ENCODE measurements at regions of chr5 and their contacts with region 1.

Region 1: GRCh38 chr5:56670118-56670483 is 145.2 kb upstream of the MAP3K1 start:
- DNase-seq: peak; percentile 51
- ATAC-seq: peak; percentile 91
- H3K4me3 Mint-ChIP-seq: peak overlapping the region; percentile 69
- H3K27ac Mint-ChIP-seq: peak overlapping the region; percentile 93
- H3K4me1 Mint-ChIP-seq: peaks cover 83% of the 10 kb centered on the region
- H3K27me3 Mint-ChIP-seq: no peaks in the 10 kb centered on the region
- CTCF ChIP-seq: no peak

Region 2: GRCh38 chr5:55885359-55885758 is 784.7 kb before region 1 on chr5:
- CTCF ChIA-PET with region 1: no interaction called
- POLR2A ChIA-PET with region 1: no interaction called
- intact Hi-C with region 1: no loop called
- DNase-seq: no peak
- ATAC-seq: no peak
- H3K4me3 Mint-ChIP-seq: no peak overlapping the region
- H3K27ac Mint-ChIP-seq: no peak overlapping the region
- H3K4me1 Mint-ChIP-seq: no peaks in the 10 kb centered on the region
- H3K27me3 Mint-ChIP-seq: peaks cover 9% of the 10 kb centered on the region
- CTCF ChIP-seq: no peak

Region 3: GRCh38 chr5:56328753-56329560 is 341.1 kb before region 1 on chr5:
- CTCF ChIA-PET with region 1: no interaction called
- POLR2A ChIA-PET with region 1: interaction called, 5 read pairs
- intact Hi-C with region 1: loop called (anchors 5 kb)
- DNase-seq: no peak
- ATAC-seq: peak; percentile 80
- H3K4me3 Mint-ChIP-seq: peak overlapping the region; percentile 52
- H3K27ac Mint-ChIP-seq: peak overlapping the region; percentile 89
- H3K4me1 Mint-ChIP-seq: peaks cover 59% of the 10 kb centered on the region
- H3K27me3 Mint-ChIP-seq: no peaks in the 10 kb centered on the region
- CTCF ChIP-seq: no peak

Region 4: DNA sequence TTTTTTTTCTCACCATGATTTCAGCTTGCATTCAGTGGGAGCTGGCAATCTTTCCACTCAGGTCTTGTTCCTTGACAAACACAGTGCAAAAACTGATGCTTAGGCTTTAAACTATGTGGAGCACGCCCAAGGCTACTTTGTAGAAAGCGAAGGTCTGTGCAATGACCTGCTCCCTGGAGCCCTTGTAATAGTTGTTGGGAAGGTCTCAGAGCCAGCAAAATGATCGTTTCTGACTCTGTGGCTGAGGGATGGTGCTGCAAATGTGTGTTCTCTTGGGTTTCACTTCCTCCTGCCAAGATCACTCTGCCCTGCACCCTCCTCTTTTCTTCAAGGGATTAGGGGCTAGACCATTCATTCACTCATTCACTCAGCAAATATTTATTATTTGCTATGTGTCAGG is 104.5 kb before region 1 on chr5:
- CTCF ChIA-PET with region 1: interaction called, 4 read pairs
- POLR2A ChIA-PET with region 1: interaction called, 12 read pairs
- intact Hi-C with region 1: loop called (anchors 2 kb)
- DNase-seq: peak; percentile 32
- ATAC-seq: peak; percentile 97
- H3K4me3 Mint-ChIP-seq: peak overlapping the region; percentile 49
- H3K27ac Mint-ChIP-seq: peak overlapping the region; percentile 33
- H3K4me1 Mint-ChIP-seq: peaks cover 48% of the 10 kb centered on the region
- H3K27me3 Mint-ChIP-seq: no peaks in the 10 kb centered on the region
- CTCF ChIP-seq: no peak

Region 5: DNA sequence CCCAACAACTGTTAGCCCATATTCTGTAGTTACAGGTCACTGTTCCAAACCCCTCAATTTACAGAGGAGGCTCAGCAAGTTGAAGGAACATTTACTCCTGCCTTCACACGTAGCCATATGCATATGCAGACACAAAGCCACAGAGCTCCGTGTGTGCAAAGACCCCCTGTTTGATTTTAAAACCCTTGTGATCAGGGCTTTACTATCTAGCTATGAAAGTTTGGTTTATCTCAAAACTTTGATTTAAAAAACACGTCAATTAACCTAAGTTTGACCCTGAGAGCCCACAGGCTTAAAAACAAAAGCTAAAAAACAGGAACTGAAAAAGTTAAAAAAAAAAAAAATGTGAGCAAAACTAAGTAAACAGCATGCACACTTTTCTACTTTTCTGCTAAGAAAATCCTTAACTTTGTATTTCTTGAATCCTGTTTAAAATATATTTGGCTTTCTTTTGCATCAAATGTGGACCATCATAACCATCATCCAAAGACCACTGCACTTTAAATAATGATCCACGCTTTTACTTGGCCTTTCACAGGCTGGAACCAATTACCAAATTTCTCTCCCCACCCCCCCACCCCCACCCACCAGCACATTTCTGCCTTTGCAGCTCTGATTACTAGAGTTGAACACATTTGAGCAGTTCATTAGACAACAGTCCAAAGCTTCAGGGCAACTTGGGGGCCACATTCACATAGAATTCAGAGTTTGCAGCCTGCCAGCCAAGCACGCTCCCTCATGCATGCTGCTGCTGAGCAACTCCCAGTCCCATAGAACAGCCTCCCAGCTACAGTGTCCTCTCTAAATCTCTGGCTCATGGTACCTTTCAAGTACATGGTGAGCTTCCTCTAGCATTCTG is 16.5 kb after region 1 on chr5:
- CTCF ChIA-PET with region 1: interaction called, 13 read pairs
- POLR2A ChIA-PET with region 1: interaction called, 84 read pairs
- intact Hi-C with region 1: loop called (anchors 1 kb)
- DNase-seq: peak; percentile 31
- ATAC-seq: peak; percentile 72
- H3K4me3 Mint-ChIP-seq: peak overlapping the region; percentile 62
- H3K27ac Mint-ChIP-seq: peak overlapping the region; percentile 88
- H3K4me1 Mint-ChIP-seq: peaks cover 98% of the 10 kb centered on the region
- H3K27me3 Mint-ChIP-seq: no peaks in the 10 kb centered on the region
- CTCF ChIP-seq: no peak

Region 6: DNA sequence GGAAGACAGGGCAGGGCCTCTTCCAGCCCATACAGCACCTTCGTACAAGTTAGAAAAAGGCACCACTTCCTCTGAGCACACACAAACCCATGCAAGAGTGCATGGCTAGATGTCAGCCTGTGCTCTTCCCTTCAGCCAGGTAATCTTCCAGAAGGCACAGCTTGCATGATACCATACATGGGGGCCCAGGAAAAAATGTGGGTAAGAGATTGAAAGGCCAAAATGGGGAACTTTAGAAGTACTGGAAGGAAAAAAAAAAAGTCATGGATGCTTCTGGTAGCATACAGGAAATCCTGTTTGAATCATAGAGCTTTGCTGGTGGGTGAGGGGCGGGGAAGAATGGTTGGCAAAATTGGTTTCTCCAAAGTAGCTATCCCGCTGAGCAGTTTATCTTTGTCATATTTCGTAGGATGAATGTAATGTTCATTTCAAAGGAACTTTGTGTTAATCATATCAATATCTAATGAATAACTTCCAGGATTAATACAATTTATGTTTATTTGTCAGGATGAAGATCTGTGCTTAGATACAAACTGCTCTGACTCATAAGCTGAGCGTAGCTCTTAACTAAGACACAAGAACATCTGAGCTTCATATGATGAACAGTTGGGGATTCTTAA is 67.0 kb after region 1 on chr5:
- CTCF ChIA-PET with region 1: interaction called, 4 read pairs
- POLR2A ChIA-PET with region 1: interaction called, 11 read pairs
- intact Hi-C with region 1: loop called (anchors 1 kb)
- DNase-seq: no peak
- ATAC-seq: peak; percentile 29
- H3K4me3 Mint-ChIP-seq: peak overlapping the region; percentile 25
- H3K27ac Mint-ChIP-seq: peak overlapping the region; percentile 83
- H3K4me1 Mint-ChIP-seq: peaks cover 62% of the 10 kb centered on the region
- H3K27me3 Mint-ChIP-seq: no peaks in the 10 kb centered on the region
- CTCF ChIP-seq: no peak

Region 7: GRCh38 chr5:56814963-56815658 is 145.0 kb after region 1 on chr5 and contains the start of gene MAP3K1:
- CTCF ChIA-PET with region 1: interaction called, 5 read pairs
- POLR2A ChIA-PET with region 1: interaction called, 26 read pairs
- intact Hi-C with region 1: loop called (anchors 1 kb)
- DNase-seq: peak; percentile 86
- ATAC-seq: peak; percentile 63
- H3K4me3 Mint-ChIP-seq: peak within 1 kb of the TSS; percentile 93
- H3K27ac Mint-ChIP-seq: peak within 1 kb of the TSS; percentile 93
- H3K4me1 Mint-ChIP-seq: peaks cover 50% of the 10 kb centered on the region
- H3K27me3 Mint-ChIP-seq: no peaks in the 10 kb centered on the region
- CTCF ChIP-seq: no peak
- total RNA-seq, gene MAP3K1: 92.8 and 102 TPM in 2 replicates

Measured in activated B cell treated with CpG ODN at 0.5 μM for 24 hours (primary cell).